ENCODE measurements at regions of chr3 and their contacts with region 1.

Region 1: GRCh38 chr3:99640214-99640851 is 1.9 kb downstream of the COL8A1 start:
- DNase-seq: no peak
- H3K4me3 ChIP-seq: no peak overlapping the region
- H3K27ac ChIP-seq: no peak overlapping the region
- H3K4me1 ChIP-seq: no peaks in the 10 kb centered on the region
- H3K27me3 ChIP-seq: peaks cover 24% of the 10 kb centered on the region
- CTCF ChIP-seq: no peak

Region 2: GRCh38 chr3:99505646-99506269 is 134.6 kb before region 1 on chr3:
- intact Hi-C with region 1: no loop called
- DNase-seq: peak; percentile 25
- H3K4me3 ChIP-seq: no peak overlapping the region
- H3K27ac ChIP-seq: no peak overlapping the region
- H3K4me1 ChIP-seq: no peaks in the 10 kb centered on the region
- H3K27me3 ChIP-seq: no peaks in the 10 kb centered on the region
- CTCF ChIP-seq: no peak

Region 3: GRCh38 chr3:99686955-99687612 is 46.8 kb after region 1 on chr3:
- intact Hi-C with region 1: loop called (anchors 5 kb)
- DNase-seq: peak; percentile 67
- H3K4me3 ChIP-seq: no peak overlapping the region
- H3K27ac ChIP-seq: no peak overlapping the region
- H3K4me1 ChIP-seq: no peaks in the 10 kb centered on the region
- H3K27me3 ChIP-seq: no peaks in the 10 kb centered on the region
- CTCF ChIP-seq: peak; percentile 61

Measured in colonic mucosa (tissue), 4 donors.